Activated CD4-positive, alpha-beta T cell treated with anti-CD3 and anti-CD28 coated beads, Interleukin-2, amount 10 ng/mL, durations not matched to agents 24 days and 14 days (primary cell): ENCODE measurements at regions of chr6 and their contacts with region 1.

Region 1: GRCh38 chr6:118283766-118284165 is 264.3 kb upstream of the PLN start:
- DNase-seq: peak; percentile 83
- H3K4me3 Mint-ChIP-seq: no peak overlapping the region
- H3K27ac Mint-ChIP-seq: no peak overlapping the region
- H3K4me1 Mint-ChIP-seq: peaks cover 2% of the 10 kb centered on the region
- H3K27me3 Mint-ChIP-seq: peaks cover 29% of the 10 kb centered on the region

Region 2: GRCh38 chr6:118134736-118135135 is 149.0 kb before region 1 on chr6:
- intact Hi-C with region 1: no loop called
- DNase-seq: no peak
- H3K4me3 Mint-ChIP-seq: no peak overlapping the region
- H3K27ac Mint-ChIP-seq: no peak overlapping the region
- H3K4me1 Mint-ChIP-seq: no peaks in the 10 kb centered on the region
- H3K27me3 Mint-ChIP-seq: peaks cover 1% of the 10 kb centered on the region

Region 3: GRCh38 chr6:118509009-118509617 is 225.3 kb after region 1 on chr6:
- intact Hi-C with region 1: loop called (anchors 10 kb)
- DNase-seq: no peak
- H3K4me3 Mint-ChIP-seq: no peak overlapping the region
- H3K27ac Mint-ChIP-seq: no peak overlapping the region
- H3K4me1 Mint-ChIP-seq: peaks cover 4% of the 10 kb centered on the region
- H3K27me3 Mint-ChIP-seq: no peaks in the 10 kb centered on the region

Region 4: DNA sequence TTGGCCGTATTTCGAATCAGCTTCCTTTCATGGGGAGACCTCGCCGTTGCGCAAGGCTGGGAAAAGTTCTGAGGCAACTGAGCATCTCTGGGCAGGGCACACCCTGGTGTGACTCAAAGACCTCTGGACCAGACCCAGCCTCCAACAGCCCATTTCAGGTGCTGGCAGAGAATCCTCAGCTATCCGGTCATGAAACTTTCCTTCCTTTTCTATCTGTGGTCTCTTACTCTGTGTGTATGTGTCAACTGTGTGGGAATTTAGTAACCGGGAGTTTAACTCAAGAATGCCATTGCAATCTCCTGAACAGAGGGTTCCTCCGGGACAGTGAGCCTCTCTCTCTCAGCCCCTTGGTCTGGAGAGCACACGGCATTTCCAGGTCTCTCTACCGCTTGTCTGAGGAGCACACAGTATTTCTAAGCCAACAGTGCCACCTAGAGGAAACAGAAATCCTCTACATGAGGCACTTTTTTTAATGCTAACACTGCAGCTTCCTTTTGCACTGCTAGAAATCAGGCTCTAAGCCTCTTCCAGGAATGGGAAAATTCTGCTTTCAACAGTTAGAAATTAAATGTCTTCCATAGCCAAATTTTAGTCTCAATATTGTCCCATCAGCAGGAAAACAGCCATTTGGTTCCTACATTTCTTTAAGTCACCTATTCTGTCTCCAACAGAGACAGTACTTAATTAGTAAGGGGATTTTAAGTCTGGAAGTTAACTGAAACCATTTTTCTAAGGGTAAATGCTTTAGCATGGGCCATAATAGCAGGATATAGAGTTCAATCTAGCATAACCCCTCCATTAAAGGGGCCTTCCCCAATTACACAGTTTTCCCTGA is 297.0 kb after region 1 on chr6:
- intact Hi-C with region 1: loop called (anchors 10 kb)
- DNase-seq: peak; percentile 78
- H3K4me3 Mint-ChIP-seq: no peak overlapping the region
- H3K27ac Mint-ChIP-seq: peak overlapping the region; percentile 76
- H3K4me1 Mint-ChIP-seq: peaks cover 7% of the 10 kb centered on the region
- H3K27me3 Mint-ChIP-seq: no peaks in the 10 kb centered on the region

Region 5: GRCh38 chr6:118776607-118777549 is 493.1 kb after region 1 on chr6:
- intact Hi-C with region 1: loop called (anchors 5 kb)
- DNase-seq: peak; percentile 91
- H3K4me3 Mint-ChIP-seq: peak overlapping the region; percentile 35
- H3K27ac Mint-ChIP-seq: peak overlapping the region; percentile 59
- H3K4me1 Mint-ChIP-seq: peaks cover 15% of the 10 kb centered on the region
- H3K27me3 Mint-ChIP-seq: peaks cover 10% of the 10 kb centered on the region

Region 6: GRCh38 chr6:118968416-118968815 is 684.6 kb after region 1 on chr6:
- intact Hi-C with region 1: loop called (anchors 10 kb)
- DNase-seq: no peak
- H3K4me3 Mint-ChIP-seq: no peak overlapping the region
- H3K27ac Mint-ChIP-seq: no peak overlapping the region
- H3K4me1 Mint-ChIP-seq: no peaks in the 10 kb centered on the region
- H3K27me3 Mint-ChIP-seq: no peaks in the 10 kb centered on the region